Activated naive CD4-positive, alpha-beta T cell treated with anti-CD3 and anti-CD28 coated beads for 36 hours (primary cell): ENCODE measurements at regions of chrX and their contacts with region 1.

Region 1: GRCh38 chrX:19642241-19643109 is 127.2 kb upstream of the MAP3K15 start:
- DNase-seq: no peak
- H3K4me3 Mint-ChIP-seq: no peak overlapping the region
- H3K27ac Mint-ChIP-seq: no peak overlapping the region
- H3K4me1 Mint-ChIP-seq: peaks cover 23% of the 10 kb centered on the region
- H3K27me3 Mint-ChIP-seq: no peaks in the 10 kb centered on the region

Region 2: DNA sequence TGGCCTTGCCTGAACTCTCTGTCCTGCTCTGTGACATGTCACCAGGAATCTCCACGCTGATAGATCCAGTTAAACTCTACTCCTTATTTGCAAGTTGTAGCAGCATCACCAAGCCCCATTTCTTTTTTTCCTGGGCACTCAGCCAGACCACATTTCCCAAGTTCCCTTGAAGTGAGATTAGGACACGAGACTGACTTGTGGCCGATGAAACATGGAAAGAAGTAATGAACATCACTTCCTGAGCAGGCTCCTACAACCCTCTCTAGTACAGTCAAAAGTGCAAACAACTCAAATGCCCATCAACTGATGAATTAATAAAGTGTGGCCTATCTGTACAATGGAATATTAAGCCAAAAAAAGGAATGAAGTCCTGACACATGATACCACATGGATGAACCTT is 201.8 kb before region 1 on chrX:
- CTCF ChIA-PET with region 1: no interaction called
- intact Hi-C with region 1: no loop called
- DNase-seq: no peak
- H3K4me3 Mint-ChIP-seq: no peak overlapping the region
- H3K27ac Mint-ChIP-seq: no peak overlapping the region
- H3K4me1 Mint-ChIP-seq: no peaks in the 10 kb centered on the region
- H3K27me3 Mint-ChIP-seq: no peaks in the 10 kb centered on the region

Region 3: GRCh38 chrX:19593690-19594089 is 48.8 kb before region 1 on chrX:
- CTCF ChIA-PET with region 1: interaction called, 3 read pairs
- intact Hi-C with region 1: loop called (anchors 5 kb)
- DNase-seq: peak; percentile 25
- H3K4me3 Mint-ChIP-seq: no peak overlapping the region
- H3K27ac Mint-ChIP-seq: peak overlapping the region; percentile 21
- H3K4me1 Mint-ChIP-seq: peaks cover 6% of the 10 kb centered on the region
- H3K27me3 Mint-ChIP-seq: no peaks in the 10 kb centered on the region

Region 4: GRCh38 chrX:19625612-19626011 is 16.9 kb before region 1 on chrX:
- CTCF ChIA-PET with region 1: no interaction called
- intact Hi-C with region 1: loop called (anchors 1 kb)
- DNase-seq: peak; percentile 68
- H3K4me3 Mint-ChIP-seq: no peak overlapping the region
- H3K27ac Mint-ChIP-seq: peak overlapping the region; percentile 90
- H3K4me1 Mint-ChIP-seq: peaks cover 65% of the 10 kb centered on the region
- H3K27me3 Mint-ChIP-seq: no peaks in the 10 kb centered on the region